Activated B cell treated with CpG ODN at 0.5 μM for 24 hours (primary cell): ENCODE measurements at regions of chr6 and their contacts with region 1.

Region 1: DNA sequence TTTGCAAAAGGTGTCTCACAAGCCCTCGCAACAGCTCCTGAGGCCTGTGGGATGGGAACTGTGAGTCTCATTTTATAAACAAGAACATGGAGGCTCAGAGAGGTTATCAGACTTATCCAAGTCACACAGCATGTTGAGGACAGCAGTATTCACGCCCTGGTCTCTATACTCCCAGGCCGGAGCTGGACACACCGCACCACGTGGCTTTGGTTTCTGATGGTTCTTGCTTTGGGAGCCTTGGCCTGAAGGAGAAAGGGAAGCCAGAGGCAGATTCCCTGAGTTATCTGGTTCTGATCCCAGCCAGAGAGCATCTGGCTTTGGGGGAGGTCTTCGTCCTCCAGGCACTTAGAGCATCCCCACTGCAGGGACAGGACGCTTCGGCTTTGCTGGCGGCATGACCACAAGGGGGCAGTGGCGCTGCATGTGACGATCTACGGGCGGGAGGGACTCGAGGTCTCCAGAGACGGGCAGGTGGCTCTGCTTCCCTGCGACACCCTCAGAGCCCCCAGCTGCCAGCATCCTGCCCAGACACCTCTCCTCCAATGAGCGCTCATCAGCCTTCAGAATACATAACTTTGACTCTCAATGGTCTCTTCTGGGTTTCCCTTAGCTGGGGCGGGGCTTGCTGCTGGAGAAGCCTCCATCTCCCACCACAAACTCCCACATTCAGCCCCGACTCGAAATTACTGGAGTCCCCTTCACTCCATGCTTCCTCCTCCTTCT is 51.4 kb upstream of the SAYSD1 start:
- DNase-seq: peak; percentile 70
- ATAC-seq: peak; percentile 75
- H3K4me3 Mint-ChIP-seq: no peak overlapping the region
- H3K27ac Mint-ChIP-seq: no peak overlapping the region
- H3K4me1 Mint-ChIP-seq: peaks cover 5% of the 10 kb centered on the region
- H3K27me3 Mint-ChIP-seq: peaks cover 15% of the 10 kb centered on the region
- CTCF ChIP-seq: peak; percentile 46

Region 2: GRCh38 chr6:38973178-38974054 is 192.9 kb before region 1 on chr6:
- CTCF ChIA-PET with region 1: no interaction called
- POLR2A ChIA-PET with region 1: no interaction called
- intact Hi-C with region 1: loop called (anchors 10 kb)
- DNase-seq: no peak
- ATAC-seq: peak; percentile 37
- H3K4me3 Mint-ChIP-seq: no peak overlapping the region
- H3K27ac Mint-ChIP-seq: no peak overlapping the region
- H3K4me1 Mint-ChIP-seq: no peaks in the 10 kb centered on the region
- H3K27me3 Mint-ChIP-seq: peaks cover 4% of the 10 kb centered on the region
- CTCF ChIP-seq: no peak

Region 3: DNA sequence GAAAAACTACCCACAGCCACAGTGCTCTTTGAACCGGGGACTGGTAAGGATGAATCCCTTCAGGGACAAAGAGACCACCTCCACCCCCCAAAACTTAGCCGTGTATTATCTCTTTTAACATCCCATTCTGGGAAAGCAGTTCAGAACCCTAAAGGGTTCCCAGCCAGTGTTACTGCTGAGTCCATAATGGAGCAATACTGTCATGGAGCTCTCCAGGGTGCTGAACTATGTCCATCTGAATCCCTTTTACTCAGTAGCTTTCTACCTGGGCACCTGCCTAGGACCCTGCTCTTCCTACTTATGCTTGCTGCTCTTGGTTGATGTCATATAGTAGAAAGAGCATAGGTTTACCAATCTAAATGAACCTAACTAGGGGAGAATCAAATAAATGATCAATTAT is 29.1 kb before region 1 on chr6:
- CTCF ChIA-PET with region 1: no interaction called
- POLR2A ChIA-PET with region 1: no interaction called
- intact Hi-C with region 1: no loop called
- DNase-seq: no peak
- ATAC-seq: no peak
- H3K4me3 Mint-ChIP-seq: no peak overlapping the region
- H3K27ac Mint-ChIP-seq: no peak overlapping the region
- H3K4me1 Mint-ChIP-seq: no peaks in the 10 kb centered on the region
- H3K27me3 Mint-ChIP-seq: peaks cover 22% of the 10 kb centered on the region
- CTCF ChIP-seq: no peak

Region 4: GRCh38 chr6:39251406-39251805 is 85.1 kb after region 1 on chr6:
- CTCF ChIA-PET with region 1: no interaction called
- POLR2A ChIA-PET with region 1: no interaction called
- intact Hi-C with region 1: no loop called
- DNase-seq: no peak
- ATAC-seq: no peak
- H3K4me3 Mint-ChIP-seq: no peak overlapping the region
- H3K27ac Mint-ChIP-seq: no peak overlapping the region
- H3K4me1 Mint-ChIP-seq: no peaks in the 10 kb centered on the region
- H3K27me3 Mint-ChIP-seq: peaks cover 11% of the 10 kb centered on the region
- CTCF ChIP-seq: no peak

Region 5: GRCh38 chr6:39309942-39310531 is 143.7 kb after region 1 on chr6:
- CTCF ChIA-PET with region 1: interaction called, 113 read pairs
- POLR2A ChIA-PET with region 1: no interaction called
- intact Hi-C with region 1: loop called (anchors 1 kb)
- DNase-seq: peak; percentile 35
- ATAC-seq: peak; percentile 64
- H3K4me3 Mint-ChIP-seq: no peak overlapping the region
- H3K27ac Mint-ChIP-seq: no peak overlapping the region
- H3K4me1 Mint-ChIP-seq: peaks cover 22% of the 10 kb centered on the region
- H3K27me3 Mint-ChIP-seq: peaks cover 36% of the 10 kb centered on the region
- CTCF ChIP-seq: no peak